Transverse colon (tissue), 4 donors: ENCODE measurements at regions of chr14 and their contacts with region 1.

Region 1: DNA sequence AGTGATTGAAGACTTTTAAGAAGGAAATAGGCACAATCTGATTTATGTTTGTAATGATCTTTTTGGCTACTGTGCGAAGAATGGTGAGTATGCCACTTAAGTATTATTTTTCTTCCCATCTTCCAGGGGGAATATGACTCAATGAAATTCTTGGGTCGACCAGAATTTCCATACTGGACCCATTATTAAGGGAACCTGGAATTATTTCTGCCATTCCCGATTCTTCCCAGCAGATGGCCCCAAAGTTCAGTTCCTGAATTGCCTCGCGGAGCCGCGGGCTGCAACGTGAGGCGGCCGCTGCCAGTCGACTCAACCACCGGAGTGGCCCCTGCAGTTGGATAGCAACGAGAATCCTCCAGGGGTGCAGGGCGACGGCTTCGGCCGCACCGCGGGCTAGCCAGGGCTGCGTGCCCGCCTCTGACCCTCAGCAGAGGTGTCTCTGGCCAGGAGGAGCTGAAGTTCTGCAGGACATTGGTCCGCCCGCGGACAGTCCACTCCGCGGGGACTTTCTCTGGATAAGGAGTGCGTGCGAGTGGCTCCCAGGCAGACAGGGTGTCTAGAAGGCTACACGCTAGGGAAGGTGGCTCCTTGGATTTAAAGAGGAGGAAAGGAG is 628 bp upstream of the TSHR start:
- DNase-seq: peak; percentile 84
- H3K4me3 ChIP-seq: peak overlapping the region; percentile 21 to 53 (median 34)
- H3K27ac ChIP-seq: no peak overlapping the region
- H3K4me1 ChIP-seq: peaks cover 0 to 11% (median 9%) of the 10 kb centered on the region in 4 donors
- H3K27me3 ChIP-seq: peaks cover 24% of the 10 kb centered on the region
- CTCF ChIP-seq: peak; percentile 80 to 90 (median 86)
- EP300 ChIP-seq: no peak
- POLR2A ChIP-seq: no peak

Region 2: GRCh38 chr14:80926397-80927074 is 28.3 kb before region 1 on chr14:
- in situ Hi-C with region 1: no loop called
- intact Hi-C with region 1: loop called (anchors 1 kb)
- DNase-seq: no peak
- H3K4me3 ChIP-seq: no peak overlapping the region
- H3K27ac ChIP-seq: no peak overlapping the region
- H3K4me1 ChIP-seq: no peaks in the 10 kb centered on the region
- H3K27me3 ChIP-seq: no peaks in the 10 kb centered on the region
- CTCF ChIP-seq: no peak
- EP300 ChIP-seq: no peak
- POLR2A ChIP-seq: no peak

Region 3: GRCh38 chr14:80987235-80988032 is 32.6 kb after region 1 on chr14:
- in situ Hi-C with region 1: loop called in 1 of 4 experiments (anchors 5 kb)
- intact Hi-C with region 1: loop called (anchors 2 kb)
- DNase-seq: peak; percentile 78
- H3K4me3 ChIP-seq: no peak overlapping the region
- H3K27ac ChIP-seq: peak overlapping the region in 1 of 4 donors; percentile 2
- H3K4me1 ChIP-seq: peaks cover 0 to 6% (median 2%) of the 10 kb centered on the region in 4 donors
- H3K27me3 ChIP-seq: peaks cover 4% of the 10 kb centered on the region
- CTCF ChIP-seq: peak; percentile 90 to 95 (median 93)
- EP300 ChIP-seq: no peak
- POLR2A ChIP-seq: no peak

Region 4: DNA sequence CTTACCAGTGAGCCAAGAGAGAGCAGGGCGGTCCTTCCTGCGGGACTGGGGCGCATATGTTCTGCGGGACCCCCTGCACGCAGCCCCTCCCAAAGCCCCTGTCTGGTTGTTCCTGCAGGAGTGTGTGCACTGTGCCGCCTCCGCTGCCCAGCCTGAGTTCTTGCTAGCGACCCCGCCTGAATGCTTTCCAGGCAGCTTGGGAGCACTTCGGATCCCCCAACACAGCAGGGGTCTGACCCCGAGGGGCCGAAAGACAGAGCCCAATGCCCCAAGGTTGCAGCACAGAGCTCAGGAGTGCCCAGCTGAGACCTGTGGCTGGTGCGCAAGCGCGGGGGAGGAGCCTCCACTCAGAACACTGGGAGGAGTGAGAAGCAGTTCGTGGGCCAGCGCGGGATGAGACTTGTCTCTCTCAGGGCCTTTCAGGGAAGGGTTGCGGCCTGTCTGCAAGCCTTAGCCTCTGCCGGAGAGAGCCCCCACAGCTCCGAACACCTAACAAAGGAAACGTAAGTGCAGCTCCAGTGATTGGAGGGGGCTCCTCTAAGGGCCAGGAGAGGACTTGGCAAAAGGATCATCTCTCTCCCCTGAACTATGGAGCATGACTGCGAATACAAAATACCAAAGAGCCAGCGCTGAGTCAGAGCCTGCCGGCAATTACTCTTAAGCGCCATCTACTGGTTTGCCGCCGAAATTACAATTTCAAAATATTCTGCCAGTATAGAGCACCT is 215.5 kb after region 1 on chr14:
- in situ Hi-C with region 1: loop called in 1 of 4 experiments (anchors 10 kb)
- intact Hi-C with region 1: no loop called
- DNase-seq: peak; percentile 93
- H3K4me3 ChIP-seq: peak overlapping the region; percentile 41 to 76 (median 60)
- H3K27ac ChIP-seq: peak overlapping the region; percentile 91 to 98 (median 94)
- H3K4me1 ChIP-seq: peaks cover 4 to 15% (median 6%) of the 10 kb centered on the region in 4 donors
- H3K27me3 ChIP-seq: no peaks in the 10 kb centered on the region
- CTCF ChIP-seq: peak; percentile 84 to 92 (median 91)
- EP300 ChIP-seq: no peak
- POLR2A ChIP-seq: peak; percentile 70

Region 5: GRCh38 chr14:81464247-81465002 is 509.6 kb after region 1 on chr14:
- in situ Hi-C with region 1: loop called in 1 of 4 experiments (anchors 25 kb)
- intact Hi-C with region 1: no loop called
- DNase-seq: peak; percentile 54
- H3K4me3 ChIP-seq: peak overlapping the region; percentile 20 to 48 (median 26)
- H3K27ac ChIP-seq: peak overlapping the region; percentile 29 to 71 (median 59)
- H3K4me1 ChIP-seq: peaks cover 0 to 6% (median 0%) of the 10 kb centered on the region in 4 donors
- H3K27me3 ChIP-seq: no peaks in the 10 kb centered on the region
- CTCF ChIP-seq: peak; percentile 90 to 96 (median 94)
- EP300 ChIP-seq: no peak
- POLR2A ChIP-seq: no peak